ENCODE measurements at regions of chr17 and their contacts with region 1.

Region 1: GRCh38 chr17:2401426-2402221 is 764 bp upstream of the MNT start:
- DNase-seq: peak; percentile 100
- ATAC-seq: peak; percentile 59
- H3K4me3 Mint-ChIP-seq: peak overlapping the region; percentile 88
- H3K27ac Mint-ChIP-seq: peak overlapping the region; percentile 99
- H3K4me1 Mint-ChIP-seq: peaks cover 43% of the 10 kb centered on the region
- H3K27me3 Mint-ChIP-seq: no peaks in the 10 kb centered on the region

Region 2: DNA sequence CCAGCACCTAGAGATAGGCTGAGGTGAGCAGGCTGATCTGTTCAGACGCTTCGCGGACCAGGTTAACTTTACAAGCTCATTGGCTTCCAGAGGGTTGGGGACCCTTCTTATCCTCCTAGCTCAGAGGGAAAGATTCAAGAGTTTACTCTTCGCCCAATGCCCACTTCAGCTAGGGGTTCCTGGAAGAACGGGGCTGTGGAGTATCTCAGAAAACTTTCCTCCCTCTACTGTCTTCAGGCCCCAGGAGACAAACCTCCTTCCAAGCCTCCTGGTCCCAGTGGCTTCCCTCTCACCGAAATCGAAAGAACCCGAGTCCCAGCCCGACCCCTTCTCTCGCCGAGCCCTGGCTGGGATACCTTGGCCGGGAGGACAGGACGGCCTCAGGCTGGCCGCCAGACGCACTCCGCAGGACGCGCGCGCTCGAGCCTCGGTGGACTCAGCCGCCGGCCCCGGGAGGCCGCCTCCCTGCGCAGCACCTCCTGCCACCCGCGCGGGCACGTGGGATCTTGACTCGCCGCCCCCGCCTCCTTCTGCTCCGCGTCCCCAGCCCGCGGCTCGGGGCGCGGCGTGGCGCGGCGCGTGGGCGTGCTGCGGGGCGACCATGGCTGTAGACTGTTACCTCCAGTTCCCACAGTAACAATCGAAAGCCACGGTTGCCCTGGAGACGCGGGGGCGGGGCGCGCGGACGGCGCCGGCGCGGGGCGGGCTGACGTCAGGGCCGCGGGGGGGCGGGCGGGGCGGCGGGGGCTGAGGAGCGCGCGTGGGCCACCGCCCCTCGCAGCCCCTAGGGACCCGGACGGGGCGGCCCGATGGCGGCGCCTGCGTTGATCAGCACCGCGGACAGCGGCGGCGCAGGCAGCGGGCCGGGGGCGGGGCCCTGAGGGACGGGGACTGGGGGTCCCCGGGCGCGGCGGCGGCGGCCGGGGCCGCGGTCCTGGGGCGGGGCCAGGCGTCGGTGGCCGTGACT is 352.0 kb before region 1 on chr17:
- CTCF ChIA-PET with region 1: no interaction called
- POLR2A ChIA-PET with region 1: no interaction called
- intact Hi-C with region 1: loop called (anchors 1 to 5 kb)
- DNase-seq: peak; percentile 92
- ATAC-seq: peak; percentile 31
- H3K4me3 Mint-ChIP-seq: peak overlapping the region; percentile 72
- H3K27ac Mint-ChIP-seq: no peak overlapping the region
- H3K4me1 Mint-ChIP-seq: peaks cover 29% of the 10 kb centered on the region
- H3K27me3 Mint-ChIP-seq: peaks cover 11% of the 10 kb centered on the region

Region 3: DNA sequence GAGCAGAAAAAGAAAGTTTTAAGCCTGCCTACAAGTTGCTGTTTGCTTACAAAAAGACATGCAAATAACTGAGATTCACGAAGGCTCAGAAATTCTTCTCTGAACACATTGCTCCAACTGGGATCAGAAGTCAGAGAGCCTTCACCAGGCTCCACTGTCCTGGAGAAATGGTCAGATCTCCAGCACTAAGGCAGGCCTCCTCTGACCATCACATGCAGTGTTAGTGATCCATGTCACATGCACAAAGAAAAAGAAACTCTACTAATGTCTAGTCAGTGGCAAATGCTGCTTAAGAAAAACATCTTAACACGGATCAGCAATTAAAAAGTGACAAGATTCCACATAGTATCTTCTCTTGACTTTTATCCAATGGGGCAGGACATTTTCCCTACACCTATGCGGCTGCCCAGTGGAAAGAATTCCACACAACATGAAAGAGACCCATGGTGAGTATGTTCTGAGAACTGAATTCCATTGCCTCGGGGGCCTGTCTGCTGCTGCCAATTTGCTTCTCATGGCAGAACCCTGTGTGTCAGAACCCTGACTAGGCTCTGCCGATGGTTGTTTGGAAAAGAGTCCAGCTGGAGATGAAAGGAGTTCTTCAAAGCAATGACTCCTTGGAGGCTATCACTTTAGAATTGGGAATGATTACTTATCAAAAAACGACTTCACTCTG is 250.1 kb before region 1 on chr17:
- CTCF ChIA-PET with region 1: no interaction called
- POLR2A ChIA-PET with region 1: no interaction called
- intact Hi-C with region 1: no loop called
- DNase-seq: no peak
- ATAC-seq: no peak
- H3K4me3 Mint-ChIP-seq: no peak overlapping the region
- H3K27ac Mint-ChIP-seq: no peak overlapping the region
- H3K4me1 Mint-ChIP-seq: no peaks in the 10 kb centered on the region
- H3K27me3 Mint-ChIP-seq: no peaks in the 10 kb centered on the region

Region 4: GRCh38 chr17:2386400-2387085 is 15.1 kb before region 1 on chr17:
- CTCF ChIA-PET with region 1: interaction called, 44 read pairs
- POLR2A ChIA-PET with region 1: interaction called, 36 read pairs
- intact Hi-C with region 1: loop called in 1 of 2 experiments (anchors 1 kb)
- DNase-seq: no peak
- ATAC-seq: no peak
- H3K4me3 Mint-ChIP-seq: no peak overlapping the region
- H3K27ac Mint-ChIP-seq: no peak overlapping the region
- H3K4me1 Mint-ChIP-seq: peaks cover 30% of the 10 kb centered on the region
- H3K27me3 Mint-ChIP-seq: no peaks in the 10 kb centered on the region

Region 5: DNA sequence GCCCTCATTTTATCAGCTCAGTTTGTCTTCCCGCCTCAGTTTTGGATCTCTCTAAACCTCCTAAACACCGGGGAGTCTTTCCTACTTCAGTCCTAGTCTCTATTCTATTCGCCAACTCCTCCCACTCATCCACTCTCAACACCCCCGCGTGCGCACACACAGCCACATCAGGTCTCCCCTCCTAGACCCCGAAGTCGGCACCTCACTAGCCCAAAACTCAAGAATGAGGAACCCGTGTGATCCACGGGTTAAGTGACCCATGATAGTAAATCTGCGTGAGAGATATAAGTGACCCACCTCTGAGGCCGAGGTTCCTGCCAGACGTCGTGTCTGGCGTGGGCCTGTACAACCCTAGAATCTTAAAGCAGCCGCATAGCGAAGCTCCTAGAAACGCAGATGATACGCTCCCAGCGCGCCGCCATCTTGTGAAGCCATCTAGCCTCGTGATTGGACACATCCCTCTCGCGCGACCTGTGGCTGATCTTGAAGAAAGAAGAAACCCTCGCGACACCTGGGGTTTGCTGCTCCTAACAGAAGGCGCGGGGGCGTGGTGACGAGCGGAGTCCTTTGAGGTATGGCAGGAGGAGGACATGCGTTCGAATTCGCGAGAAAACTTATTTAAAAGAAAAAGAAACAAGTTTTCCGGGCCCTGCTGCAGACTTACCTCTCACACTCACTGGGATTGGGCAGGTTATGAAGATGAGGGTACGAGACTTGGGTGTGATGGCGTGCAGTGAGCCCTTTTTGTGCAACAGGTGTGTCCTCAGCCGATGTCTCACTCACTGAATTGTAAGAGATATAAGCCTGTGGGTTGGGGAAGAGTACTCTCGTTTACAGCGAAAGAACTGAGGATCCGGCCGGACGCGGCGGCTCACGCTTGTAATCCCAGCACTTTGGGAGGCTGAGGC is 110.1 kb after region 1 on chr17 and contains the start of gene METTL16:
- CTCF ChIA-PET with region 1: no interaction called
- POLR2A ChIA-PET with region 1: no interaction called
- intact Hi-C with region 1: loop called in 1 of 2 experiments (anchors 2 kb)
- DNase-seq: peak; percentile 100
- ATAC-seq: peak; percentile 99
- H3K4me3 Mint-ChIP-seq: no peak within 1 kb of the TSS
- H3K27ac Mint-ChIP-seq: no peak within 1 kb of the TSS
- H3K4me1 Mint-ChIP-seq: peaks cover 17% of the 10 kb centered on the region
- H3K27me3 Mint-ChIP-seq: no peaks in the 10 kb centered on the region
- total RNA-seq, gene METTL16: 50.1 to 61.6 TPM

Region 6: DNA sequence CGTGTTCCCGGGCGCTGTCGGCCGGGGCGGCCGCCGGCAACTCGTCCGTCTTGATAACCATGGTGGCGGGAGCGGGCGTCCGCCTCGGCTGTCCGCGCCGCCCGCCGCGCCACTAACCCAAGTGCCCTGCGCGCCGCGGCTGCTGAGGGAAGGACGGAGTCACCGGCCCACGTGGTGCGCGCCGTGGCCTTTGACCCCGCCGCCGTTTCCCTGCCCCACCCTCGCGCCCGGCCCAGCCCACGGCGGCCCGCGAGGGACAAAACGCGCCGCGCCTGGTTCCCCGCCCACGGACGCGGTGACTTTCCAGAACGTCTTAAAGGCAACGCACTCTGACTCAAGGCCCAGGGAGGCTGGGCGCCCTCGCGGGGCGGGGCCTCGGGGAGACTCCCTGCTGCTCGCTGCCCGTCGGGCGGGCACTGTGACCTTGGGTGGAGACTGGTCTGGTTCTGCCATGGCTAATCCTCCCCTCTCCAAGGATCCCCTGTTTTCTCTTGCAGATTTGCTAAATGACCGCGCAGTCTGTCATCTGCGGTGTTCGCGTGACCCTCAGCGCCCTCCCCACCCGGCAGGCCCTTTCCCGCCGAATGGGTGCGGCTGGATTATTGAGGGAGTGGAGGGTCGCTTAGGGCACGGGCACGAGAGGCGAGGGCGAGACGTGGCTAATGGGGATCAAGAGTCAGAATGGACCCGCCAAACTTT is 310.1 kb after region 1 on chr17 and contains the start of gene CLUH:
- CTCF ChIA-PET with region 1: no interaction called
- POLR2A ChIA-PET with region 1: no interaction called
- intact Hi-C with region 1: loop called in 1 of 2 experiments (anchors 1 kb)
- DNase-seq: peak; percentile 98
- ATAC-seq: peak; percentile 95
- H3K4me3 Mint-ChIP-seq: peak within 1 kb of the TSS; percentile 86
- H3K27ac Mint-ChIP-seq: peak within 1 kb of the TSS; percentile 84
- H3K4me1 Mint-ChIP-seq: peaks cover 35% of the 10 kb centered on the region
- H3K27me3 Mint-ChIP-seq: no peaks in the 10 kb centered on the region
- total RNA-seq, gene CLUH: 107 to 123 TPM